Heart right ventricle (tissue), 16 donors: ENCODE measurements at regions of chr12 and their contacts with region 1.

Region 1: GRCh38 chr12:18139989-18140596 is 50.1 kb upstream of the RERGL start:
- DNase-seq: no peak
- ATAC-seq: no peak
- H3K4me3 ChIP-seq: no peak overlapping the region
- H3K27ac ChIP-seq: no peak overlapping the region
- H3K4me1 ChIP-seq: peaks cover 0 to 21% (median 0%) of the 10 kb centered on the region in 9 donors
- H3K27me3 ChIP-seq: no peaks in the 10 kb centered on the region
- CTCF ChIP-seq: peak; percentile 24 to 71 (median 67)

Region 2: GRCh38 chr12:18057051-18057450 is 83.0 kb before region 1 on chr12:
- intact Hi-C with region 1: no loop called
- DNase-seq: no peak
- ATAC-seq: no peak
- H3K4me3 ChIP-seq: no peak overlapping the region
- H3K27ac ChIP-seq: no peak overlapping the region
- H3K4me1 ChIP-seq: no peaks in the 10 kb centered on the region
- H3K27me3 ChIP-seq: no peaks in the 10 kb centered on the region
- CTCF ChIP-seq: no peak

Region 3: GRCh38 chr12:18290386-18290785 is 150.3 kb after region 1 on chr12:
- intact Hi-C with region 1: no loop called
- DNase-seq: no peak
- ATAC-seq: no peak
- H3K4me3 ChIP-seq: peak overlapping the region in 1 of 10 donors; percentile 1
- H3K27ac ChIP-seq: no peak overlapping the region
- H3K4me1 ChIP-seq: no peaks in the 10 kb centered on the region
- H3K27me3 ChIP-seq: no peaks in the 10 kb centered on the region
- CTCF ChIP-seq: no peak

Region 4: DNA sequence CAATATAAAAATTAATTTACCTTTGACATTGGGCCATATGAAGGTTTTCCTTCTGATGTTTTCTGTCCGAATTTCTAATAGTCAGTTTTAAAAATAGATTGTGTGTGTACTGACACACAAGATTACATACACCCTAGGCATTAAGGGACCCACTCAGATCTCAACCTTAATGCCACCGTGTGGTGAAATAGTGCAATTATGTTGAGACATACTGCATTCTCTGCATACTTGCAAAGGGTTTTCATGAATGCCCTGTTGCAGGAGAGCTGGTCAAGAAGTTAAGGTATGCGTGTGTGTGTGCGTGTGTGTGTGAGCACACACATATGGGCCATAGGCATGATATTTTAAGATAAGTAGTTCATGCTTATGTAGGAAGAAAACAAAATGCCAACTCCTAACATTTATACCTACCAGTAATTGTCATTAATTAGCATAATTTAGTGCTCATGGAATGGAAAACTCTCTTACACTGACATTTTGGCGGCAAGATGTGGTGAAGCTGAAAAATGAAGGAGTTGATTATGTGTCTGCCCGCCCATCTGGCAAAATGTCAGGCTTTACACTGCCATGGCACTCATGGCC is 180.0 kb after region 1 on chr12:
- intact Hi-C with region 1: loop called in 1 of 10 experiments (anchors 5 kb)
- DNase-seq: no peak
- ATAC-seq: peak in 7 of 8 donors; percentile 45 to 77 (median 69)
- H3K4me3 ChIP-seq: no peak overlapping the region
- H3K27ac ChIP-seq: no peak overlapping the region
- H3K4me1 ChIP-seq: peaks cover 0 to 6% (median 0%) of the 10 kb centered on the region in 9 donors
- H3K27me3 ChIP-seq: no peaks in the 10 kb centered on the region
- CTCF ChIP-seq: peak; percentile 17 to 53 (median 45)

Region 5: GRCh38 chr12:18373181-18373580 is 233.1 kb after region 1 on chr12:
- intact Hi-C with region 1: no loop called
- DNase-seq: no peak
- ATAC-seq: no peak
- H3K4me3 ChIP-seq: no peak overlapping the region
- H3K27ac ChIP-seq: no peak overlapping the region
- H3K4me1 ChIP-seq: no peaks in the 10 kb centered on the region
- H3K27me3 ChIP-seq: no peaks in the 10 kb centered on the region
- CTCF ChIP-seq: no peak